ENCODE measurements at regions of chr18 and their contacts with region 1.

Region 1: DNA sequence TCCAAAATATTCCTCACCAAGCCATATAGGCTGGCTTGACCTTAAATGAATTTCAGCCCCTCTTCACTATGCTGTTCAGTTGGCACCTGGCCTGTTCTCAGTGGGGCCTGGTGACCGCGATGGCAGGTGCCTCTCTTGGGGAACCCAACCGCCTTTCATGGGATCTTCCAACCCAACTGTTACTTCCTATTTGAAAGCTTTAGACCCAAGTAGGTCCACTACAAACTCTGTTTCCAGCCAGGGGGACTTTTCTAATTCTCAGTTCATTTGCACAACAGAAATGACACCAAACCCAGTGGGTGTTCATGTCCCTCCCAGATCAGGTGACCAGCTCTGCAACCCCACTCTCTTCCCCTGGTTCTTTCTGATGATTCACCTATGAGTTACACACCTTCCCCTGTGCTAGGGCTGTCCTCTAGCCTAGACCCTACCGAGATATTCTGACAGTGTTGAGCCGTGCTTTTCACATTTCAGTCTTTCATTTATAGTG is 35.6 kb upstream of the NDUFV2 start:
- DNase-seq: no peak
- H3K4me3 Mint-ChIP-seq: no peak overlapping the region
- H3K27ac Mint-ChIP-seq: peak overlapping the region; percentile 61
- H3K4me1 Mint-ChIP-seq: peaks cover 20% of the 10 kb centered on the region
- H3K27me3 Mint-ChIP-seq: no peaks in the 10 kb centered on the region

Region 2: GRCh38 chr18:8786478-8787370 is 280.1 kb before region 1 on chr18:
- CTCF ChIA-PET with region 1: no interaction called
- POLR2A ChIA-PET with region 1: no interaction called
- intact Hi-C with region 1: no loop called
- DNase-seq: peak; percentile 11
- H3K4me3 Mint-ChIP-seq: no peak overlapping the region
- H3K27ac Mint-ChIP-seq: no peak overlapping the region
- H3K4me1 Mint-ChIP-seq: peaks cover 4% of the 10 kb centered on the region
- H3K27me3 Mint-ChIP-seq: no peaks in the 10 kb centered on the region

Region 3: DNA sequence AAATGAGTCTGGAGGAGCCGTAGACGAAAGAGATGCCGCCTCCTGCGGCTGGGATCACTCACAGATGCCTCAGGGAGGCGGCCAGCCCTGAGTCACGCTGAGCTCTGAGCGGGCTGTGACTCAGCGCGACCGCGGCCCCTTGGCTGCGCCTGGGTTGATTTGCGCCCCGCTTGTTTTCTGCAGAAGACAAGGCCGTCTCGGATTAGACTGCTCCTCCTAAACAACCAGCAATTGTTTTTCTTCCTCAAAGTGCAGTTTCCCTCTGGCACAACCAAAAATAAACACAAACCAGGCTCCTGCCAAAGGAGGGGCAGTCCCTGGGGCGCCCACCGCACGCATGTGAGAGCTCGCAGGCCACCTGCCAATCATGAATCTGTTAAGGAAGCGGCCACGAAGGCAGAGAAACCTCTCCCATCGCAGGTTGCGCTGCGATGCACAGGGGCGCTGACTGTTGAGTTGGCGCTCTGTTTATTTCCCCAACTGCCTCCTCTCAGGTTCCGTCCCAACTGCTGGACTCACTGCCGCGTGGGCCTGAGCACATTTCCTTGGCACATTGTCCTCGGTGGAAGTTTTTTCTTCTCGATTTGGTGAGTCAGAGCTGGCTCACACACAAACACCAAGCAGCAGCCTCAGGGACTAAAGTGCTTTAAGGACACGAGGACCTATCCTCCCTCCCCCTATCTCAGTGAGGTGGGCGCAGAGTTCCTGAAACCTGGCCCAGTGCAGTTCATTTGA is 49.5 kb before region 1 on chr18:
- CTCF ChIA-PET with region 1: no interaction called
- POLR2A ChIA-PET with region 1: no interaction called
- intact Hi-C with region 1: loop called (anchors 5 kb)
- DNase-seq: peak; percentile 89
- H3K4me3 Mint-ChIP-seq: peak overlapping the region; percentile 61
- H3K27ac Mint-ChIP-seq: peak overlapping the region; percentile 74
- H3K4me1 Mint-ChIP-seq: peaks cover 14% of the 10 kb centered on the region
- H3K27me3 Mint-ChIP-seq: peaks cover 5% of the 10 kb centered on the region

Measured in activated CD4-positive, alpha-beta memory T cell treated with anti-CD3 and anti-CD28 coated beads for 36 hours (primary cell).